ENCODE measurements at regions of chr2 and their contacts with region 1.

Region 1: GRCh38 chr2:74002487-74003391 is 18.0 kb downstream of the TET3 start:
- DNase-seq: peak; percentile 73 to 95 (median 86)
- H3K4me3 ChIP-seq: peak overlapping the region; percentile 60 to 96 (median 84)
- H3K27ac ChIP-seq: peak overlapping the region in 58 of 59 donors; percentile 66 to 93 (median 87)
- H3K27me3 ChIP-seq: no peaks in the 10 kb centered on the region
- CTCF ChIP-seq: peak in 25 of 56 donors; percentile 3 to 63 (median 31)

Region 2: GRCh38 chr2:73830871-73831401 is 171.8 kb before region 1 on chr2:
- intact Hi-C with region 1: loop called (anchors 5 kb)
- DNase-seq: no peak
- H3K4me3 ChIP-seq: peak overlapping the region in 13 of 59 donors; percentile 2 to 96 (median 24)
- H3K27ac ChIP-seq: peak overlapping the region in 43 of 59 donors; percentile 4 to 99 (median 57)
- H3K27me3 ChIP-seq: no peaks in the 10 kb centered on the region
- CTCF ChIP-seq: no peak

Region 3: DNA sequence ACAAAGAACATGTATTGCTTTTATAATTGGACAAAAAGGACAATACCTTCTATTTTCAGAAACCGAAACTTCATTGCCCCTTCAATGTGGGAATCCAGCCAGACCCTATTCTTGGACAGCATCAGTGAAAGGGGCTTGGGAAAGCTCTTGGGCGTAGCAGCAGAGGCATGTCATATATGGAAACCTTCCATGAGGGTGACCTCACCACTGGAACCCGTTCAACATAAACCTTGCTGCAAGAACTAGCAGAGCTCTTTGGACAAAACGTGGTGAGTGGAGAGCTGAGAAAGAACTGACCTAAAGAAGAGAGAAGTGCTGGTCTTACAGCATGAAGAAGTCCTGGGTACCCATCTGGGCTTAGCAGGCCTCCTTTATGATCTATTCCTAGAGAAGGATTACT is 132.7 kb before region 1 on chr2:
- intact Hi-C with region 1: no loop called
- DNase-seq: peak in 1 of 10 donors; percentile 17
- H3K4me3 ChIP-seq: no peak overlapping the region
- H3K27ac ChIP-seq: peak overlapping the region in 14 of 59 donors; percentile 0 to 68 (median 36)
- H3K27me3 ChIP-seq: no peaks in the 10 kb centered on the region
- CTCF ChIP-seq: no peak

Region 4: DNA sequence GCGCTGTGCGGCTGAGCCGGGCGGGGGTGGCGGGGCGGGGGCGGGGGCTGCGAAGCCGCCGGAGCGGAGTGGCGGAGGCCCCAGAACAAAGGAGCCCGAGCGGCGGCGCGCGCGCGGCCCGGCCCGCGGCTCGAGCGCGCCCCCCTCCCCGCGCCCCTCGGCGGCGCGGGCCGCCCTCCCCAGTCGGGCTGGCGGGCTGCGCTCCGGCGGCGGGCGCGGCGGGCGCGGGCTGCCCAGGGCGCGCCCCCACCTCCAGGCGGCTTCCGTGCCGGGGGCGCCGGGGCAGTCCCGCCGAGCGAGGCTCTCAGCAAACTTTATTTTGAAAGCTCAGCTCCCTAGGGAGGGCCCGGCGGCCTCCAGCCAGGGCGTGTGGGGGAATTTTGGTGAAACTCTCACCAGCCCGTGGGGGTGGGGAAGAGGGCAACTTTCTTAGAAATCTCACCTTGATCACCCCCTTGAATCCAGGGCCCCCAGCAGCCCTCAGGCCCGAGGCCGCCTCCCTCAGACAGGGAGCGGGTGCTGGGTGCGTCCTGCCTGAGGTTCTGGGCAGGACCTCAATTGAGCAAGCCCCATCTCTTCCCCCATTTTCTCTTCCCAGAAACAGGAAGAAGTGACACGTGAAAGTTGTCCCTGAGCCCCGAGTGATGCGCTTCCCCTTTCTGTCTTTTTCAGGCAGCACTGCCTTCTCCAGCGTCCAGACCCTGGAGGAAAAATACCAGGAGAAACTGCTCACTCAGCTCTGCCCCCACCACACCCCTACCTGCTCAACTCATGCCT is 17.2 kb before region 1 on chr2:
- intact Hi-C with region 1: loop called in 1 of 2 experiments (anchors 2 kb)
- DNase-seq: peak in 1 of 10 donors; percentile 43
- H3K4me3 ChIP-seq: peak overlapping the region; percentile 29 to 78 (median 64)
- H3K27ac ChIP-seq: peak overlapping the region in 16 of 59 donors; percentile 5 to 79 (median 60)
- H3K27me3 ChIP-seq: no peaks in the 10 kb centered on the region
- CTCF ChIP-seq: peak in 1 of 56 donors; percentile 10

Region 5: GRCh38 chr2:74092275-74092674 is 89.5 kb after region 1 on chr2:
- intact Hi-C with region 1: loop called in 1 of 2 experiments (anchors 5 kb)
- DNase-seq: no peak
- H3K4me3 ChIP-seq: no peak overlapping the region
- H3K27ac ChIP-seq: peak overlapping the region in 58 of 59 donors; percentile 57 to 94 (median 87)
- H3K27me3 ChIP-seq: no peaks in the 10 kb centered on the region
- CTCF ChIP-seq: no peak

Region 6: GRCh38 chr2:74119912-74120825 is 117.4 kb after region 1 on chr2:
- intact Hi-C with region 1: loop called in 1 of 2 experiments (anchors 5 kb)
- DNase-seq: peak; percentile 65 to 90 (median 79)
- H3K4me3 ChIP-seq: peak overlapping the region; percentile 51 to 91 (median 71)
- H3K27ac ChIP-seq: peak overlapping the region in 54 of 59 donors; percentile 40 to 95 (median 80)
- H3K27me3 ChIP-seq: no peaks in the 10 kb centered on the region
- CTCF ChIP-seq: peak; percentile 40 to 90 (median 74)